B cell (primary cell): ENCODE measurements at regions of chr22 and their contacts with region 1.

Region 1: DNA sequence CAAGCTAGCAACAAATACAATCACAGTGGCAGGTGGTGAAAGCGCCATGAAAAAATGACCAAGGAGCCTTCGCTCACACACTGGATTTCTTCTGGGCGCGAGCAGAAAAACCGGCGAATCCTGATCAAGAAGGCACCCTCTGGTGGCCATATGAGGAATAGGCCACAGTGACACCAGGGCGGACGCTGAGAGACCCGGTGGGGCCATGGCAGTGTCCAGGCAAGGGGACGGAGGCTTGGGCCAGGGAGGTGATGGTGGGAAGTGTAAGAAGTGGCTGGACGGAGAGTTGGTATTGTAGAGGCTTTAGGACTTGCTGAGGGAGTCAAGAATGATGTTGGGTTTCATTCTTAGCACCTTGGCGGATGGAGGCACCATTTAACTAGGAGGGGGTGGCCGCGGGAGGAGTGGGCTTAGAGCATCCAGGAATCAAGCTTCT is 16.9 kb upstream of the RAC2 start:
- DNase-seq: peak; percentile 82
- ATAC-seq: peak; percentile 85
- H3K4me3 ChIP-seq: no peak overlapping the region
- H3K4me3 Mint-ChIP-seq: peak overlapping the region; percentile 27
- H3K27ac ChIP-seq: no peak overlapping the region
- H3K27ac Mint-ChIP-seq: peak overlapping the region; percentile 12
- H3K4me1 ChIP-seq: peaks cover 27 to 36% of the 10 kb centered on the region in 2 donors
- H3K4me1 Mint-ChIP-seq: peaks cover 31% of the 10 kb centered on the region
- H3K27me3 ChIP-seq: no peaks in the 10 kb centered on the region
- H3K27me3 Mint-ChIP-seq: no peaks in the 10 kb centered on the region
- CTCF ChIP-seq: peak; percentile 95

Region 2: GRCh38 chr22:37166675-37167066 is 94.2 kb before region 1 on chr22:
- CTCF ChIA-PET with region 1: interaction called, 83 read pairs
- POLR2A ChIA-PET with region 1: no interaction called
- intact Hi-C with region 1: loop called (anchors 1 kb)
- DNase-seq: peak; percentile 84
- ATAC-seq: peak; percentile 59
- H3K4me3 ChIP-seq: no peak overlapping the region
- H3K4me3 Mint-ChIP-seq: peak overlapping the region; percentile 57
- H3K27ac ChIP-seq: no peak overlapping the region
- H3K27ac Mint-ChIP-seq: peak overlapping the region; percentile 47
- H3K4me1 ChIP-seq: peaks cover 17 to 46% of the 10 kb centered on the region in 2 donors
- H3K4me1 Mint-ChIP-seq: peaks cover 40% of the 10 kb centered on the region
- H3K27me3 ChIP-seq: no peaks in the 10 kb centered on the region
- H3K27me3 Mint-ChIP-seq: peaks cover 4% of the 10 kb centered on the region
- CTCF ChIP-seq: peak; percentile 92

Region 3: DNA sequence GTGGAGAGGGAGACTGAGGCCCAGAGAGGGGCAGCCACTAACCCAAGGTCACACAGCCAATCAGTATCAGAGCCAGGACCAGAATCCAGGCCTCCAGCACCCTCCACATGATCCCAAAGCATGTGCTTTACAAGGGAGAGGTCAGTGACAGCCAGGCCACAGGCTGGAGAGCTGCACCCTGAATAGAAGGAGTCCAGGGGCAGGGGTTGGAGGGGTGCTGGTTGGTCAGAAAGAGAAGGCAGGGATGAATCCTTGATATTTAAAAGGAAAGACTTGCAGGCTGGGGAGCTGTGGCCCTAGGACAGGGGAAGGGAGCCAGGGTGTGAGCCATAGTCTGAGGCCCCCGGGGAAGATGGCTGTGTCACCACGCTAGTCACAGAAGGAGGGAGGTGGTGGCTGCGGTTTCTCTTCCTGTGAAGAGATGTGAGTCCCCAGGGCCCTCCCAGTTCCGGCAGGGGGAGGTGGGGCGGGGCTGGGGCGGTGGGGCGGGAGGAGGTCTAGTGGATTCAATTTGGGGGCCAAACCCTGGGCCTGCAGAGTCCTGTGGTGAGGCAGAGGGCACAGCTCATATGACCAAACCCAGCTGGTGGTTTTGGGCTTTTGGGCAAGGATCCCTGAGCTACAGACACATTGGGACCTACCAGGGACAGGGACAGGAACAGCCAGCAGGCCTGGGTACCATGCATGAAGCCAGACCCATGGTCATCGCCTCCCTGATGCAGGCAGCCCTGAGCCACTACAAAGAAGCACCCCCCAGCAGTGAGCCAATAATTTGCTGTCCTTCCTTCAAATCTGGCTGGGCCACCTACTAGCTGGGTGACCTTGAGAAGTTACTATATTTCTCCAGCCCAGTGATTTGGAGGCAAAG is 30.9 kb before region 1 on chr22:
- CTCF ChIA-PET with region 1: interaction called, 118 read pairs
- POLR2A ChIA-PET with region 1: interaction called, 5 read pairs
- intact Hi-C with region 1: loop called (anchors 2 kb)
- DNase-seq: peak; percentile 85
- ATAC-seq: peak; percentile 87
- H3K4me3 ChIP-seq: peak overlapping the region; percentile 13 to 30 (median 18)
- H3K4me3 Mint-ChIP-seq: peak overlapping the region; percentile 86
- H3K27ac ChIP-seq: peak overlapping the region; percentile 91 to 96
- H3K27ac Mint-ChIP-seq: peak overlapping the region; percentile 100
- H3K4me1 ChIP-seq: peaks cover 85 to 95% of the 10 kb centered on the region in 2 donors
- H3K4me1 Mint-ChIP-seq: peaks cover 88% of the 10 kb centered on the region
- H3K27me3 ChIP-seq: no peaks in the 10 kb centered on the region
- H3K27me3 Mint-ChIP-seq: no peaks in the 10 kb centered on the region
- CTCF ChIP-seq: no peak

Region 4: GRCh38 chr22:37316875-37317371 is 56.0 kb after region 1 on chr22:
- CTCF ChIA-PET with region 1: interaction called, 64 read pairs
- POLR2A ChIA-PET with region 1: no interaction called
- intact Hi-C with region 1: no loop called
- DNase-seq: peak; percentile 83
- ATAC-seq: peak; percentile 86
- H3K4me3 ChIP-seq: no peak overlapping the region
- H3K4me3 Mint-ChIP-seq: no peak overlapping the region
- H3K27ac ChIP-seq: no peak overlapping the region
- H3K27ac Mint-ChIP-seq: no peak overlapping the region
- H3K4me1 ChIP-seq: peaks cover 20 to 29% of the 10 kb centered on the region in 2 donors
- H3K4me1 Mint-ChIP-seq: peaks cover 32% of the 10 kb centered on the region
- H3K27me3 ChIP-seq: peaks cover 0 to 3% (median 0%) of the 10 kb centered on the region in 4 experiments
- H3K27me3 Mint-ChIP-seq: peaks cover 12% of the 10 kb centered on the region
- CTCF ChIP-seq: peak; percentile 85

Region 5: GRCh38 chr22:37419969-37420685 is 159.2 kb after region 1 on chr22:
- CTCF ChIA-PET with region 1: no interaction called
- POLR2A ChIA-PET with region 1: no interaction called
- intact Hi-C with region 1: no loop called
- DNase-seq: peak; percentile 30
- ATAC-seq: no peak
- H3K4me3 ChIP-seq: peak overlapping the region in 3 of 5 experiments; percentile 23 to 46 (median 25)
- H3K4me3 Mint-ChIP-seq: peak overlapping the region; percentile 90
- H3K27ac ChIP-seq: no peak overlapping the region
- H3K27ac Mint-ChIP-seq: no peak overlapping the region
- H3K4me1 ChIP-seq: peaks cover 17 to 20% of the 10 kb centered on the region in 2 donors
- H3K4me1 Mint-ChIP-seq: peaks cover 22% of the 10 kb centered on the region
- H3K27me3 ChIP-seq: peaks cover 0 to 62% (median 19%) of the 10 kb centered on the region in 4 experiments
- H3K27me3 Mint-ChIP-seq: peaks cover 62% of the 10 kb centered on the region
- CTCF ChIP-seq: no peak

Region 6: GRCh38 chr22:37457093-37457893 is 196.4 kb after region 1 on chr22:
- CTCF ChIA-PET with region 1: interaction called, 34 read pairs
- POLR2A ChIA-PET with region 1: interaction called, 12 read pairs
- intact Hi-C with region 1: no loop called
- DNase-seq: peak; percentile 82
- ATAC-seq: peak; percentile 95
- H3K4me3 ChIP-seq: no peak overlapping the region
- H3K4me3 Mint-ChIP-seq: no peak overlapping the region
- H3K27ac ChIP-seq: no peak overlapping the region
- H3K27ac Mint-ChIP-seq: no peak overlapping the region
- H3K4me1 ChIP-seq: no peaks in the 10 kb centered on the region
- H3K4me1 Mint-ChIP-seq: peaks cover 1% of the 10 kb centered on the region
- H3K27me3 ChIP-seq: no peaks in the 10 kb centered on the region
- H3K27me3 Mint-ChIP-seq: no peaks in the 10 kb centered on the region
- CTCF ChIP-seq: peak; percentile 97